ENCODE measurements at regions of chr12 and their contacts with region 1.

Region 1: GRCh38 chr12:43882578-43883178 is 46.8 kb downstream of the TMEM117 start:
- DNase-seq: no peak
- ATAC-seq: peak in 3 of 4 donors; percentile 58 to 75 (median 74)
- H3K4me3 ChIP-seq: no peak overlapping the region
- H3K27ac ChIP-seq: no peak overlapping the region
- H3K4me1 ChIP-seq: peaks cover 0 to 8% (median 0%) of the 10 kb centered on the region in 12 donors
- H3K27me3 ChIP-seq: no peaks in the 10 kb centered on the region
- CTCF ChIP-seq: peak; percentile 69 to 86 (median 78)
- POLR2A ChIP-seq: no peak

Region 2: GRCh38 chr12:43444940-43445564 is 437.6 kb before region 1 on chr12:
- intact Hi-C with region 1: loop called in 8 of 10 experiments (anchors 2 to 10 kb)
- DNase-seq: peak in 2 of 5 donors; percentile 14 to 28
- ATAC-seq: no peak
- H3K4me3 ChIP-seq: no peak overlapping the region
- H3K27ac ChIP-seq: no peak overlapping the region
- H3K4me1 ChIP-seq: no peaks in the 10 kb centered on the region
- H3K27me3 ChIP-seq: no peaks in the 10 kb centered on the region
- CTCF ChIP-seq: peak; percentile 52 to 75 (median 66)
- POLR2A ChIP-seq: no peak

Region 3: DNA sequence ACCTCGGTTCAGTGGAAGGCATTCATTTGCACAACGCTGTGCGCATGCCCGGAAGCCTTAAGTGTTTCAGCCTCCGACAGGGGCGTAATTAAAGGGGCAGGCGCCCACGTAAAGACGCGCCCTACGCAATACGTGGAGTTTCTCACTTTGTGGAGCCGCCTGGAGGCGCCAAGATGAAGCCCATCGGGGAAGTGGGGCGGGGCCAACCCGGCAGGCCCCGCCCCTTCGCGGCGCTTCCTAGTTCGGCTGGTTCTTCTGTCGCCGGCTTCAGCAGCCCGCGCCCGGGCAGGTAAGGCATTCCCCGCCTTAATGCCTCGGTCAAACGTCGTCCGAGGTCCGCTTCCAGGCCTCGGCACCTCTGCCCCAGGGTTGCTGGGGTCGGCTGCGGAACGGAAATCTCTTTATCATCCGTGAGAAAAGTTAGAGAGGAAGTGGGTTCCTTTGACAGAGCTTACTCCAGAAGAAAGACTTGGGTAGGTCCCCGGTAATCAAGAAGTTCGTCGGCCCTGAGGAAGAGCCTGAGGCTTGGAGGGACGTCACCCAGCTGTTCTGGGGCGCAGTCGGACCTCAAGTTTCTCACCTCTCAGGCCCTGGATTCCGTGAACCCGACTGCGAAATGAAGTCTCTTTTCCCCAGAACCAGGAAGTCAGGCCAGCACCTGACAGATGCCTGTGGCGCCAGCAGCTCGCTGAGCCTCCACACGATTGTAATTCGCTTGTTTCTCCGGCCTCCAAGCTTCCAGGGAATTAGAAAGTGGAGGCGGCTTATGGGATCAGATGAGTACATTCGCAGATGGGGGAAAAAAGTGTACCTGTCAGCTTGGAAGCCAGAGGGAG is 123.7 kb before region 1 on chr12 and contains the starts of genes IRAK4 and PUS7L:
- intact Hi-C with region 1: loop called in 4 of 10 experiments (anchors 5 to 10 kb)
- DNase-seq: peak; percentile 92 to 97 (median 96)
- ATAC-seq: peak; percentile 99 to 100 (median 100)
- H3K4me3 ChIP-seq: peak within 1 kb of the TSS; percentile 45 to 92 (median 78)
- H3K27ac ChIP-seq: peak within 1 kb of the TSS; percentile 41 to 94 (median 81)
- H3K4me1 ChIP-seq: peaks cover 0 to 45% (median 18%) of the 10 kb centered on the region in 12 donors
- H3K27me3 ChIP-seq: no peaks in the 10 kb centered on the region
- CTCF ChIP-seq: peak in 11 of 12 donors; percentile 22 to 76 (median 40)
- POLR2A ChIP-seq: peak in 1 of 2 donors; percentile 65
- total RNA-seq, gene IRAK4: 3.6 to 14.4 (median 5.1) TPM
- total RNA-seq, gene PUS7L: 3.7 to 7.6 (median 5.3) TPM

Region 4: DNA sequence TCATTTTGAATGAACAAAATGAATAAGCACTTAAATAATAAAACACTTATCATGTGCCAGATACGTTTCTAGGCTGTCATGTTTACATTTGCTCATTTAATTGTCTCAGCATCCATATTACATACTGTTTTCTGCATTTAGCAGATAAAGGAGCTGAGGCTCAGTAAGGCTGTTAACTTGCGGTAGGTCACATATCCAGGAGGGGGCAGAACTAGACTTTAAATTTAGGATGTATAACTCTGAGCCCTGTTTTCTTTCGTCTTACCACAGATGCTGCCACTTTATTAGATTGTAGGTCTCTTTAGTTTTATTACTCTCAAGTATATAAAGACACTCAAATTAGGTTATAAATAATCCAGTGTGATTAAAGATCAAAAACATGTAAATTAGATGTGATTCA is 106.2 kb before region 1 on chr12:
- intact Hi-C with region 1: loop called in 6 of 10 experiments (anchors 5 to 10 kb)
- DNase-seq: no peak
- ATAC-seq: no peak
- H3K4me3 ChIP-seq: no peak overlapping the region
- H3K27ac ChIP-seq: no peak overlapping the region
- H3K4me1 ChIP-seq: no peaks in the 10 kb centered on the region
- H3K27me3 ChIP-seq: no peaks in the 10 kb centered on the region
- CTCF ChIP-seq: peak in 10 of 12 donors; percentile 7 to 45 (median 23)
- POLR2A ChIP-seq: no peak

Region 5: GRCh38 chr12:43805860-43806736 is 76.6 kb before region 1 on chr12 and contains the start of gene TWF1:
- intact Hi-C with region 1: loop called in 5 of 10 experiments (anchors 1 to 10 kb)
- DNase-seq: peak; percentile 90 to 95 (median 92)
- ATAC-seq: peak; percentile 87 to 100 (median 99)
- H3K4me3 ChIP-seq: peak within 1 kb of the TSS; percentile 63 to 99 (median 88)
- H3K27ac ChIP-seq: peak within 1 kb of the TSS; percentile 87 to 98 (median 95)
- H3K4me1 ChIP-seq: peaks cover 0 to 38% (median 23%) of the 10 kb centered on the region in 12 donors
- H3K27me3 ChIP-seq: no peaks in the 10 kb centered on the region
- CTCF ChIP-seq: peak in 7 of 12 donors; percentile 15 to 43 (median 35)
- POLR2A ChIP-seq: peak in 1 of 2 donors; percentile 75
- total RNA-seq, gene TWF1: 9.3 to 34.6 (median 10.7) TPM

Measured in heart left ventricle (tissue), 16 donors.